ENCODE measurements at regions of chr1 and their contacts with region 1.

Region 1: GRCh38 chr1:20212685-20213331 is 26.5 kb upstream of the PLA2G2C start:
- DNase-seq: peak; percentile 66 to 85 (median 83)
- ATAC-seq: peak; percentile 74 to 79
- H3K4me3 ChIP-seq: no peak overlapping the region
- H3K27ac ChIP-seq: no peak overlapping the region
- H3K4me1 ChIP-seq: no peaks in the 10 kb centered on the region
- H3K27me3 ChIP-seq: no peaks in the 10 kb centered on the region

Region 2: DNA sequence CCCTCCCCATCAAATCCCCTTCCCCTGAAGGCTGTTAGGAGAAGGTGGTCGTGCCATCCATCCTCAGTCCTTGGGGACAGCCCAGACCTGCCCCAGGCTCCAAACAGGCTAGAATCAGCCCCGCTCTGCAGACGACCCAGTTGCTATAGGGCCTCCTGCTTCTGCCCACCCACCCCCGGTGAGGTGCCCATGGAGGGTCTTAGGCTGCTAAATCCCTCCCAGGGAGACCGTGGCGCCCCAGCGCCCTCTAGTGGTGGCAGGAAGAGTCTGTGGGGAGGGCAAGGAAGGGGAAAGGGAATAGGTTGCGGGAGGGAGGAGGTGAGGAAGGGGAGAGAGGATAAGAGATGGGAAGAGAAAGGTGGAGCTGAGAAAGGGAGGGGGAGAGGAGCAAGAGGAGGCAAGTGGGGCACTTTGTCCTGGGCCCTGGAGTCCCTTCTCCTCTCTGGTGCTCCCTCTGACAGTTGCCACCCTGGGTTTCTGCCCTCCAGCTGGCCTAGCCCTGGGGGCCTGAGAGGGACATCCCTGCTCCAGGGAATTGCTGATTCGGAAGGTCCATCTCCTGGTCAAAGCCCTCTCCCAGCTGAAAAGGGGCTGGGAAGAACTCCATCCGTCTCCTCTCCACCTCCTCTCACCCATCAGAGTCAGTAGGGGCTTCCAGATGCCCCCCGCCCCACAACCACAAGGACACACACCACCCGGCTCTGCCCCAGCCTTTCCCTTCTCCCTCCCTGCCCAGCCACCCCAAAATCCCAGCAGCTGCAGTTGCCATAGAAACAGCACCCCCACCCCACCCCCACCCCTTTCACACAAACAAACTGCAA is 217.8 kb after region 1 on chr1:
- intact Hi-C with region 1: loop called in 2 of 4 experiments (anchors 5 kb)
- DNase-seq: peak in 2 of 3 donors; percentile 33 to 65
- ATAC-seq: peak; percentile 16 to 57
- H3K4me3 ChIP-seq: no peak overlapping the region
- H3K27ac ChIP-seq: no peak overlapping the region
- H3K4me1 ChIP-seq: no peaks in the 10 kb centered on the region
- H3K27me3 ChIP-seq: no peaks in the 10 kb centered on the region

Region 3: DNA sequence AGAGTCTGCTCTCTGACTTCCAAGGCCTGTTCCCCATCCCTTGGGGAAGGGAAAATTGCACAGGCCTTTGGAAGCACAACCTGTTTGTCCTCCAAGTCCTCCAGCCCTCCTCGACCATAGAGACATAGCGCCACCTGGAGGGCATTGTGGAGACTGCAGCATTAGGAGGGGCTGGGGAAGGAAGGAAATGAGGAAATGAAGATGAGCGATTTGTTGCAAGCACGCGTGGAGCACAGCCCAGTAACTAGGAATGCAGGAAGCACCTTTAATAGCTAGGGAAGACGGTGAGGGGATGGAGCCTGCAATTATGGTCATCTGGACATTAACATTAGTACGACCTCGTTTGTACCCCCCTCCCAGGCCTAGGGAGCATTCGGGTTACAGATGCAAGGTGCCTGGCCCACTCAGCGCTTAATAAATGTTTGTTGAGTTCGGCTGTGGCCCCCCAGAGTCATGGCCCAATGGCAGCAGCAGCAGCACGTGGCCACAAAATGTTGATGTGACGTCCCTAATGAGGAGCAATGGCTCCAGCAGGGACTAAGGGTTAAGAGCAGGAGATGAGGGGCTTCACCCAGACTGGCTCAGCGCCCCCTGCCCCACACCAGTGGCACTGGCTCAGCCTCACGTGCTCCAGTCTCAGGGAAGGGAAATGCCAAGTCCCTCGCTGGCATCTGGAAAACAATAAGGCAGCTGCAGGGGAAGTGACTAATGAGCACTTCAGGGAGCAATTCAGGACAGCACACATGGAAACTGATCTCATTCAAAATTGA is 281.2 kb after region 1 on chr1:
- intact Hi-C with region 1: loop called (anchors 2 kb)
- DNase-seq: peak; percentile 80 to 94 (median 91)
- ATAC-seq: peak; percentile 82 to 88
- H3K4me3 ChIP-seq: no peak overlapping the region
- H3K27ac ChIP-seq: no peak overlapping the region
- H3K4me1 ChIP-seq: no peaks in the 10 kb centered on the region
- H3K27me3 ChIP-seq: no peaks in the 10 kb centered on the region